ENCODE measurements at regions of chr1 and their contacts with region 1.

Region 1: GRCh38 chr1:23403735-23404486 is 20.6 kb downstream of the TCEA3 start:
- DNase-seq: peak; percentile 93
- ATAC-seq: peak; percentile 99
- H3K4me3 Mint-ChIP-seq: no peak overlapping the region
- H3K27ac Mint-ChIP-seq: no peak overlapping the region
- H3K4me1 Mint-ChIP-seq: peaks cover 4% of the 10 kb centered on the region
- H3K27me3 Mint-ChIP-seq: no peaks in the 10 kb centered on the region
- CTCF ChIP-seq: peak; percentile 87

Region 2: DNA sequence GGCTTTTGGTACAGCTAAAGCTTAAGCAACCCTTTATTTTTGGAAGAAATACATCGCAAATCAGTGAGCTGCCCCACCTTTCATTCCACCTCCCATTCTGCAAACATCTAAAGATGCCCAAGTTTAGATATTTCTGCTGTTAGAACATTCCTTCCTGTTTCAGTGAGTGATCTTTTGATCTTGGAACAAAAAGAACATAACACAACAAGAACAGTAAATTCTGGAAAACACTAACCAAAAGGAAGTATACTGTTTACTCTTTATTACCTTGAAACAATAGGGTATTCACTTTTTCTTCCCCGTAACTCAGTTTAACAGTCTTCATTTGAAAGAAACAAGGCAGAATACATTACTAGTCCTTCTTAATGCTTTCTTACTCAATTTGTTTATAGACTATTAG is 100.4 kb before region 1 on chr1:
- CTCF ChIA-PET with region 1: interaction called, 11 read pairs
- POLR2A ChIA-PET with region 1: no interaction called
- intact Hi-C with region 1: no loop called
- DNase-seq: no peak
- ATAC-seq: no peak
- H3K4me3 Mint-ChIP-seq: no peak overlapping the region
- H3K27ac Mint-ChIP-seq: no peak overlapping the region
- H3K4me1 Mint-ChIP-seq: no peaks in the 10 kb centered on the region
- H3K27me3 Mint-ChIP-seq: no peaks in the 10 kb centered on the region
- CTCF ChIP-seq: no peak

Region 3: DNA sequence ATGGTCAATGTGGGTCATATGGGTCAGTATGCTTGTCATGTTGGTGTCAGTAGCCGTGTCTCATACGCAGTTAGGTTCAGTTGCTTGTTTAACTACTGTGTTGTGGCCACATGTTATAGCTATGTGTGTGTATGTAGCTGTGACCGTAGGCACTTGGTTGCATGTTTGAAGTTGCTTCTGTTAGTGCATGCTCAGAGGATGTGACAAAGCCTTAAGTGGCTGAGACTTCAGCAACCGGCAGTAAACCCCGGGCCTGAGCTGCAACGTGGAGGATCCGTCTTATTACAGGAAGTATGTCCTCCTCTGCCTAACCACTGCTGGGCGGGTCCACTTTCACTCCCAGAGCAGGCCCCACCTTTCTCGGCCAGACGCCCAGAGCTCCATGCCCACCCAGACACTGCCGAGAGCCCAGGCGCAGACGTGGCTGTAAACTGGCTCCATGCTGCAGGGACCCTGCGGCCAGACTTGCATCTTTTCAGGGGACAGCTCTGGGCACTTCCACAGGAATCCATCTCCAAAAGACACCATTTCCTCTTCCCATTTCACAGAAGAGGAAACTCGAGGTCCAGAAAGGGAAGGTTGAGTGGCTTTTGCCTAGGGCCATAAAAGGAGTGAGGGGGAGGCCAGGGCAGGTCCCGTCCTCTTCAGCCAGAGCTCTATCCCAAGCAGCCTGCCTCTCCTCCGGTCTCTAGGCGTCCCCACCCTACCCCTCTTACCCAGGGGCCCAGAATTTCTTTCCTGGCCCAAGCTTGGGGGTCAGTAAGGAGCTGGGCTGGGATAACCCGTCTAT is 18.5 kb after region 1 on chr1:
- CTCF ChIA-PET with region 1: interaction called, 22 read pairs
- POLR2A ChIA-PET with region 1: interaction called, 4 read pairs
- intact Hi-C with region 1: no loop called
- DNase-seq: peak; percentile 77
- ATAC-seq: peak; percentile 79
- H3K4me3 Mint-ChIP-seq: peak overlapping the region; percentile 76
- H3K27ac Mint-ChIP-seq: peak overlapping the region; percentile 78
- H3K4me1 Mint-ChIP-seq: peaks cover 24% of the 10 kb centered on the region
- H3K27me3 Mint-ChIP-seq: peaks cover 8% of the 10 kb centered on the region
- CTCF ChIP-seq: no peak

Measured in activated CD8-positive, alpha-beta T cell treated with anti-CD3 and anti-CD28 coated beads for 36 hours (primary cell).